Left cardiac atrium (tissue), 4 donors: ENCODE measurements at regions of chr16 and their contacts with region 1.

Region 1: GRCh38 chr16:4506450-4506849 is 30.3 kb downstream of the HMOX2 start:
- DNase-seq: peak; percentile 60
- ATAC-seq: peak; percentile 81 to 85

Region 2: GRCh38 chr16:4183237-4184036 is 323.0 kb before region 1 on chr16:
- intact Hi-C with region 1: no loop called
- DNase-seq: peak; percentile 94
- ATAC-seq: peak; percentile 97

Region 3: GRCh38 chr16:4548124-4548523 is 41.7 kb after region 1 on chr16:
- intact Hi-C with region 1: loop called (anchors 5 kb)
- DNase-seq: no peak
- ATAC-seq: no peak

Region 4: DNA sequence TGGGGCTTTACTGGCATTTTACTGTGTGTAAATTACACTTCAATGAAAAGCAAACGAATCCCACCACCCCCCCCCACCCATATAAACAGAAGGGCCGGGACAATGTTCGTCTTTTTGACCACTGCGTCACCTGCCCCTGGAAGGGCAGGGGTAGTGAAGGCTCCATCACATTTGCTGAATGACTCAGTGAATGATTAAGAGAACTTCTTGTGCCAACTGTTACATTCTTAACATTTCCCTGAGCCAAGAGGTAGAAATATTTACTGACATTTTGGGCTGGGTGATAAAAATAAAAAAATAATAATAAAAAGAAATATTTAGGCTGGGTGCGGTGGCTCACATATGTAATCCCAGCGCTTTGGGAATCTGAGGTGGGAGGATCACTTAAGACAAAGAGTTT is 73.8 kb after region 1 on chr16:
- intact Hi-C with region 1: loop called (anchors 10 kb)
- DNase-seq: no peak
- ATAC-seq: peak in 1 of 2 donors; percentile 69